Caco-2 (cell line): ENCODE measurements at regions of chr2 and their contacts with region 1.

Region 1: GRCh38 chr2:27765621-27766269 is 5.8 kb upstream of the MRPL33 start:
- DNase-seq: peak; percentile 95 to 96
- H3K4me3 ChIP-seq: peak overlapping the region; percentile 22
- H3K4me3 Mint-ChIP-seq: peak overlapping the region; percentile 85
- H3K27ac Mint-ChIP-seq: peak overlapping the region; percentile 98
- H3K4me1 ChIP-seq: peaks cover 59% of the 10 kb centered on the region
- H3K4me1 Mint-ChIP-seq: peaks cover 27% of the 10 kb centered on the region
- H3K27me3 ChIP-seq: no peaks in the 10 kb centered on the region
- H3K27me3 Mint-ChIP-seq: no peaks in the 10 kb centered on the region
- CTCF ChIP-seq: no peak

Region 2: GRCh38 chr2:27723372-27724144 is 42.2 kb before region 1 on chr2:
- CTCF ChIA-PET with region 1: interaction called, 5 read pairs
- POLR2A ChIA-PET with region 1: interaction called, 4 read pairs
- intact Hi-C with region 1: loop called (anchors 1 kb)
- DNase-seq: peak; percentile 78 to 81
- H3K4me3 ChIP-seq: no peak overlapping the region
- H3K4me3 Mint-ChIP-seq: no peak overlapping the region
- H3K27ac Mint-ChIP-seq: peak overlapping the region; percentile 80
- H3K4me1 ChIP-seq: peaks cover 60% of the 10 kb centered on the region
- H3K4me1 Mint-ChIP-seq: peaks cover 48% of the 10 kb centered on the region
- H3K27me3 ChIP-seq: no peaks in the 10 kb centered on the region
- H3K27me3 Mint-ChIP-seq: no peaks in the 10 kb centered on the region
- CTCF ChIP-seq: peak; percentile 85 to 87

Region 3: GRCh38 chr2:27855476-27855875 is 89.7 kb after region 1 on chr2:
- CTCF ChIA-PET with region 1: no interaction called
- POLR2A ChIA-PET with region 1: no interaction called
- intact Hi-C with region 1: no loop called
- DNase-seq: no peak
- H3K4me3 ChIP-seq: no peak overlapping the region
- H3K4me3 Mint-ChIP-seq: no peak overlapping the region
- H3K27ac Mint-ChIP-seq: no peak overlapping the region
- H3K4me1 ChIP-seq: no peaks in the 10 kb centered on the region
- H3K4me1 Mint-ChIP-seq: no peaks in the 10 kb centered on the region
- H3K27me3 ChIP-seq: no peaks in the 10 kb centered on the region; the same call in 1 of the 2 replicates
- H3K27me3 Mint-ChIP-seq: no peaks in the 10 kb centered on the region
- CTCF ChIP-seq: no peak